ENCODE measurements at regions of chr2 and their contacts with region 1.

Region 1: DNA sequence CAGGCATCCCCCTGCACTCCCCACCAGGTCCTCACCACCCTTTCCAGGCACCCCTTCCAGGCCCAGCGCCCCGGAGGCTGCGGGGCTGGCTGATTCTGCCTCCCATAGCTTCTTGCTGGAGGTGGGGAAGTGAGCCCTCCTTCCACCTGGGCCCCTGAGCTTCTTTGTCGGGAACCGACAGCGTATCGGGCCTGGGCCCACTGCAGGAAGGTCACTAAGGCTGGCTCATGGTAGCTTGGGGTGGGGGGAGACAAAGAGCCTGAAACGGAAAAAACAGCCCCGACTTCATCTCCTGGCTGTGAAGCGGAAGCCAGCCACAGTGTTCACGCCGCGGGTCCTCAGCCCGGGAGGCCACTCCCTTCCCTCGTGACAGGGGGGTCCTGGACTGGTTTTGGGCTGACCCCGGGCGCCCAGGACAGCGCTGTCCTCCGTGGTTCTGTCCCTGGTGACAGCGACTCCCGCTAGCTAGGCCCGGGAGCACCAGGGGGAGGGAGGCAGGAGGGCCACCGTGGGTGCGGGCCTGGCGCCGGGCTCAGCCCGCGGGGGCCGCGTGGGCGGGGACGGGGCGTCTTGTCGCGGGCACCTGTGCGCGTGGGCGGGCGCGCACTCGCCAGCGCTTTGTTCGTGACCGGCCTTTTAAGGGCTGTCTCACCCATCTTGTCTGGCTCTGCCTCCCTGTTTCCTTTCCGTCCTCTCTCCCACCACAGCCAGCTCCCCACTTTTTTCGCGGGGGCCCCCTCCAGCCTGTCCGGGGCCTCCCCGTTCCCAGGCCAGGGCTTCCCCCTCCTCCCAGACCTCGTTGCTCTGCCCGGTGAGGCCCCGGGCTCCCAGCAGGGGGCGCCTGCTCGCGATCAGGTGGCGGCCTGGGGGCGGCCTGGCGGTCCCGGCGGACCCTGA is 64.9 kb downstream of the DNMT3A start:
- DNase-seq: peak; percentile 79
- H3K4me3 Mint-ChIP-seq: peak overlapping the region; percentile 53
- H3K27ac Mint-ChIP-seq: peak overlapping the region; percentile 82
- H3K4me1 Mint-ChIP-seq: peaks cover 65% of the 10 kb centered on the region
- H3K27me3 Mint-ChIP-seq: no peaks in the 10 kb centered on the region

Region 2: DNA sequence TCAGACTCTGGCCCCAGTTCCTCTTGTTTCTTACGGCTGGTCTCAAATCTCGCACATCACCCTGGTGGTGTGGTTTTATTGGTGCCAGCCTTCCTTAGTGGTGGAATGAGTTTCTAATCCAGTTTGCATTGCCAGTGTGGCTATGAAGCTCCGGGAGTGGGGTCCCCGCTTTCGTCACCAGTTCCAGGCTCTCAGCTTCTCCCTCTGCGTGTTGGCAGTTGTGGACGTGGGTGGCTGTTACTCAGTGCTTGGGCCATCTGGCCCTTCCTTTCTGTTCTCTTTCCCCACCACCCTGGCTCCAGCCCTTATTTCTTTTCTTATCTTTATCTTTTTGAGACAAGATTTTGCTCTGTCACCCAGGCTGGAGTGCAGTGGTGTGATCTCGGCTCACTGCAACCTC is 204.9 kb before region 1 on chr2:
- CTCF ChIA-PET with region 1: no interaction called
- POLR2A ChIA-PET with region 1: no interaction called
- DNase-seq: no peak
- H3K4me3 Mint-ChIP-seq: no peak overlapping the region
- H3K27ac Mint-ChIP-seq: no peak overlapping the region
- H3K4me1 Mint-ChIP-seq: no peaks in the 10 kb centered on the region
- H3K27me3 Mint-ChIP-seq: peaks cover 6% of the 10 kb centered on the region

Region 3: DNA sequence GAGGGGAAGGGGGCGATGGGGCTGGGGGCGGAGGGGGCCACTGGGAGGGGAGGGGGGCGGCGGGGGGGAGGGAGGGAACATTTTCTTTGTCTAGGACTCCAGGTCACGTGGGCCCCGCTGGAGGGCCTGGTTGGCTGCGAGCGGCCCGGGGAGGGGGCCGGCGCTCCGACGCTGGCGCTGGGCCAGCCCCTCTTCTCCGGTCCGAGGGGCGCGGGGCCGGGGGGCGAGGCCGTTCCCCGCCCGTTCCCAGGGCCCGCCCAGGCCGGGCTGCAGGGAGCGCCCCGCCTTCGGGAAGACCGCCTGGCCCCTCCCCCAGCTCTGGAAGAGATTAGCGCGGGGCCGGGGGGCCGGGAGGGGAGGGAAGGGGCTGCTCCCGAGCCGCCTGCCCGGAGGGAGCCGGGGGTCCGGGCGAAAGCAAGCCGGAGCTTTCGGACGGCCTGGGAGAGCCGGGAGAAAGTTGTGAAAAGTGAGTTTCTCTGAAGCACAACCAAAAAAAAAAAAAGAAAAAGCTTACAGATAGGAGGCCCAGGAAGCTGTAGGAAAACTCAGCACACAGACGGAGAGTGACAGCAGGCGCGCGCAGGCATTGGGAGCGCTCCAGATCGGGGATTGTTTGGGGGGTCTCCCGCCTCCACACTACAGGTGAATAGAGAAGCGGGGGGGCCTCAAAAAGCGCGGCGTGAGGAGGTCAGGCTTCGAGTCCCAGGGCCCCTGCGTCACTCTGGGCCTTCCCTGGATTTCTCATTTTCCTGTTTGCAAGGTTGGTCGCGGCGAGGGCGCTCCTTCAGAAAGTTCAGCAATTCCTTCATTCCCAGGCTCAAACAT is 24.3 kb before region 1 on chr2:
- CTCF ChIA-PET with region 1: interaction called, 6 read pairs
- POLR2A ChIA-PET with region 1: interaction called, 18 read pairs
- DNase-seq: peak; percentile 63
- H3K4me3 Mint-ChIP-seq: peak overlapping the region; percentile 76
- H3K27ac Mint-ChIP-seq: no peak overlapping the region
- H3K4me1 Mint-ChIP-seq: peaks cover 15% of the 10 kb centered on the region
- H3K27me3 Mint-ChIP-seq: no peaks in the 10 kb centered on the region

Region 4: DNA sequence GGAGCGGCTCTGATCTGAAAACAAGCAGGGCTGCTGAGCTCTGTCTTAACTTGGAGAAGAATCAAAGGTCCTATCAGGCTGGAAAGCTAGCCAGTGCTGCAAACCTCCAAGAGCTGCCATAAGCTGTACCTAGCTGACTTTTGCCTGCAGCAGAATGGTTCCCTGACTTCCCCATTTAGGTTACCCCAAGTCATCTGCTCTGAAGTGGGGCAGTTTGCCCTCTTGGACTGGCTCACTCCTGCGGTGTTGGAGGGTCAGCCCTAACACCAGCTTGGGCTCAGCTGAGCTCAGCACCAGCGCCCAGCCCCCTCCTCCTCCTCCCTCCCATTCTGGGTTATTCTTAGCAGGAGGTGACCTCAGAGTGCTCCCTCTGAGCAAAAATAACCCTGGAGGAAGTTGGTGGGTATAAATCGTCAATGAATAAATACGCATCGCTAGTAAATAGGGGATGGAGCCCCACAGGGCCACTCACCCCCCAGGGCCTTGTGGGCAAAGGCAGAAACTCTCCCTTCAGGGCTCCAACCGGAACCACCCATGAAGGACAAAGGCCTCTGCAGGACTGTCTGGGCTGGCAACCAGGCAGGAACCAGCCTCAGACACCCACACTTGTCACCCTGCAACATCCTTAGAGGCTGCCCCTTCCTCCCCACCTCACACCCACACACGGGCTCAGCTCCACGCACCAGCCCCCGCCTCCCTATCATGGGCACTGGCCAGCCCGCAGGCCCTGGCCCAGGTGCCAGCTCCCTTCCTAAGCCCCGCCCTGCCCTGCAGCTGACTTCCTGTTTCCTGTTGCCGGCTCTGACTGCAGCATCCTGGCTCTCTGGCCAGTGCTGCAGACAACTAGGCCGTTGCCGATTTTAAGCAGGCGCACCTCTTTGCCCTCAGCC is 18.0 kb after region 1 on chr2:
- CTCF ChIA-PET with region 1: interaction called, 30 read pairs
- POLR2A ChIA-PET with region 1: interaction called, 47 read pairs
- DNase-seq: peak; percentile 90
- H3K4me3 Mint-ChIP-seq: peak overlapping the region; percentile 62
- H3K27ac Mint-ChIP-seq: peak overlapping the region; percentile 94
- H3K4me1 Mint-ChIP-seq: peaks cover 38% of the 10 kb centered on the region
- H3K27me3 Mint-ChIP-seq: no peaks in the 10 kb centered on the region

Region 5: DNA sequence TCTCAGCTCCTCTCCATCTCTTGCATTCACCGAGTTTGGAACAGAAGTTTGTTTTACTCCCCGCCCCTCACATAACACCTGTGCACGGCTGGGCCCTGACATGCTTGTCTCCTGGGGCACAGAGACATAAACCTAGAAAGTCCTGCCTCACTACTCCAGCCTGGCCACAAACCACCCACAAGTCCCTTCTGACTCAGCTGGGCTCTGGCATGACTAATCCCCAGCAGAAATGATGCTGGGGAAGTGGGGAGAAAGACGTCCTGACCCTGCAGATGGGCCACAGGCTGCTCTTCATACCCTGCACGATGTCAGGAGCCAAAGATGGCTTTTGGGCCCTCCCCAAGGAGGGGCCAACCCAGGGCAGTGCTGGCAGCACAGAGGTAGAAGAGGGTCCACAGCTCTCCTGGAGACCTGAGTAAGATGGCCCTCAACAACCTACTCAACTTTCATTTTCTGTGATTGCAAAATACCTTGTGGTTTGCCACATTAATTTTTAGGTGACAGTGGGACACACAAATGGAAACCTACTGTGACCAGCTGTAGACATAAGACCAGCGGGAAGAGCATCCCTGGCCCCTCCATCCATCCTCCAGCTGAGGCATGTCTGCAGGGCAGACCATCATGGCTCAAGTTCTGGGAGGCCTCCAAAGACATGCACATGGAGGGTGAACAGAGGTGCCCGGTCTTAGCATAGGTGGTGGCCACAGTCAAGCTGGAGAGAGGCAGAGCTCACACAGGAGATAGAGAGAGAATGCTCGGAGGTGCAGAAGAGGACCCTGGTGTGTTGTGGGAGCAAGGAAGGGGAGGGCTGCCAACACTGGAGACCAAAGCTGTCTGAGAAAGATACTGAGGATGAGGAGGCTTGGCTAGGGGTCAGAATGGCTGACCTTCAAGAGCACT is 24.9 kb after region 1 on chr2:
- CTCF ChIA-PET with region 1: interaction called, 30 read pairs
- POLR2A ChIA-PET with region 1: interaction called, 47 read pairs
- DNase-seq: peak; percentile 88
- H3K4me3 Mint-ChIP-seq: peak overlapping the region; percentile 9
- H3K27ac Mint-ChIP-seq: peak overlapping the region; percentile 63
- H3K4me1 Mint-ChIP-seq: peaks cover 36% of the 10 kb centered on the region
- H3K27me3 Mint-ChIP-seq: no peaks in the 10 kb centered on the region

Region 6: DNA sequence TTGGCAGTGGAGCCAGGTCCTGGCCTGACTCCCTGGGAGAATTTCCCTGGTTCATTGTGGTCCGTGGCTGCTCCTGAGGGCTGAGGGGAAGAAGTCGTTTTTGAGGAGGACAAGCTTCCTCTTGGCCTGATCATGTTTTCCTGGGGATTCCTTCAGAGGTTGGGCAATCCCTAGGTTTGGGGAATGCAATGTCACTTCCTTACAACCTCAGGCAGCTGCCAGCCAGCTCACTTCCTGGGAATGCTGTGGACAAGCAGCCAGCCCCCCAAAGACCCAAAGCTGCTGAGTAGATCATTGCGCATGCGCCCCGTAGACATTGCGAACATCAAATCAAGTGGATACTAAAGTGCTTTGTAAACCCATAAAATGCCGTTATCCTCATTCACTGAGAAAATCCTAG is 72.6 kb after region 1 on chr2:
- CTCF ChIA-PET with region 1: no interaction called
- POLR2A ChIA-PET with region 1: no interaction called
- DNase-seq: no peak
- H3K4me3 Mint-ChIP-seq: no peak overlapping the region
- H3K27ac Mint-ChIP-seq: no peak overlapping the region
- H3K4me1 Mint-ChIP-seq: peaks cover 26% of the 10 kb centered on the region
- H3K27me3 Mint-ChIP-seq: peaks cover 10% of the 10 kb centered on the region

Region 7: GRCh38 chr2:25567406-25567805 is 290.6 kb after region 1 on chr2:
- CTCF ChIA-PET with region 1: interaction called, 10 read pairs
- POLR2A ChIA-PET with region 1: no interaction called
- DNase-seq: no peak
- H3K4me3 Mint-ChIP-seq: no peak overlapping the region
- H3K27ac Mint-ChIP-seq: no peak overlapping the region
- H3K4me1 Mint-ChIP-seq: peaks cover 13% of the 10 kb centered on the region
- H3K27me3 Mint-ChIP-seq: no peaks in the 10 kb centered on the region